CD4-positive, alpha-beta T cell (primary cell): ENCODE measurements at regions of chr18 and their contacts with region 1.

Region 1: DNA sequence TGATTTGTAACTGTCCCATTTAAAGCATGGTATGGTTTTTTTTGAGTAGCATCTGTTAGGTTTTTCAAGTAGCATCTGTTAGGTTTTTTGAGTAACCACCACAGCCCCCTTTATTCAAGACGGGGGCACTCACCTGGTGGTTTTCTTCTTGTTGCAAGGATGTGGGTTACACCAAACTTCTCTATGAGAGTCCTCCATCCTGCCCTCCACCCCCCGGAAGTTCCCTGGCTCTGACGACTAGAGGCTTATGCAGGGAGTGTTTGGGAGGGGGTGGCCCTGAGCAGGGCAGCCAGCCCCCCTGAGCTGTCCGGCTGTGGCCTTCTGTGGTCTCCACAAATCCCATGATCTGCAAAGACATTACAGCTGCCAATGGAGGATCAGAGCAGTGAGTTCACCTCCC is 39.3 kb downstream of the MTCL1 start:
- DNase-seq: peak in 11 of 14 experiments; percentile 5 to 77 (median 40)
- ATAC-seq: peak; percentile 73
- H3K4me3 ChIP-seq: no peak overlapping the region
- H3K4me3 Mint-ChIP-seq: peak overlapping the region; percentile 64
- H3K27ac ChIP-seq: no peak overlapping the region
- H3K27ac Mint-ChIP-seq: peak overlapping the region; percentile 75
- H3K4me1 ChIP-seq: peaks cover 22% of the 10 kb centered on the region
- H3K4me1 Mint-ChIP-seq: peaks cover 52% of the 10 kb centered on the region
- H3K27me3 ChIP-seq: no peaks in the 10 kb centered on the region
- H3K27me3 Mint-ChIP-seq: no peaks in the 10 kb centered on the region
- CTCF ChIP-seq: no peak

Region 2: DNA sequence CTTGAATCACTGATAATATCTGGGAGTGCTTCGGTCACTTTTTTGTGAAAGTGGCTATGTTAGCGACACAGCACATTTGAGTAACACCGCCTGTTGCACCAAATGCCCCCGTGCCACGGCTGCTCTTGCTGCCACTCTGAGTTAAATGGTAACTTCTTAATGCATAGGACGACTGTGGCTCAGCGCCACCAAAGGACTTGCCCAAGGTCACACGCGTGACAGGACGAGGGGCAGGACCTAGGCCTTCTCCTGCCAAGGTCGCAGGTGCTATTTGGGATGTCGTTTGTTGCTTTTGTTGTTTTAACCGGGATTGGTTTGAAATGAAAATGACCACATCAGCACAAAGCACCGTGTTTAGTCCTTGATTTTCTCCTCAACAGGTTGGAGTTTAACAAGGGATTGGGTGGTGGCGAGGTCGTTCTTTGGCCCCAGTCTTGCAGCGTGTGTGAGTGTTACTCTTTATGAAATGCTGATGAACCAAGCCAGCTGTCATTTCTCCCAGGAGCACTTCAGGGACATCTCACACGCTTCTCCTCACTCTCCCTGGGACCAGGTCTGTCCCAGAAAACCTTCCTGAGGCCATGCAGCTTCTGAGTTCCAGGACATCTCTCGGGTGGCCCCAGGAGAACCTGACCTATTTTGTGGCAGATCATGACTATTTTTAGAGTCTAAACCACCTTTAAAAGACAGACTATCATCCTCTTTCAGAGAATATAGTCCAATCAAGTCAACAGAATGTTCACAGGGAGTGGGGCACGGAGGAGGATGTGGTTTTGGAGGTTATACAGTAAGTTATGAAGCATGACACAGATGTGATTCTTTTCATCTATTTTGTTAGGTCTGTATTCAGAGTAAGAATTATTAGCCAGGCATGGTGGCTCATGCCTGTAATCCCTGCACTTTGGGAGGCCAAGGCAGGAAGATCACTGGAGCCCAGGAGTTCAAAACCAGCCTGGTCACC is 10.6 kb after region 1 on chr18:
- CTCF ChIA-PET with region 1: no interaction called
- POLR2A ChIA-PET with region 1: no interaction called
- intact Hi-C with region 1: loop called in 1 of 2 experiments (anchors 1 kb)
- DNase-seq: peak; percentile 31 to 91 (median 44)
- ATAC-seq: peak; percentile 99
- H3K4me3 ChIP-seq: peak overlapping the region; percentile 10
- H3K4me3 Mint-ChIP-seq: peak overlapping the region; percentile 75
- H3K27ac ChIP-seq: no peak overlapping the region
- H3K27ac Mint-ChIP-seq: peak overlapping the region; percentile 43
- H3K4me1 ChIP-seq: peaks cover 31% of the 10 kb centered on the region
- H3K4me1 Mint-ChIP-seq: peaks cover 32% of the 10 kb centered on the region
- H3K27me3 ChIP-seq: no peaks in the 10 kb centered on the region
- H3K27me3 Mint-ChIP-seq: no peaks in the 10 kb centered on the region
- CTCF ChIP-seq: no peak